H1 (cell line): ENCODE measurements at regions of chr6 and their contacts with region 1.

Region 1: DNA sequence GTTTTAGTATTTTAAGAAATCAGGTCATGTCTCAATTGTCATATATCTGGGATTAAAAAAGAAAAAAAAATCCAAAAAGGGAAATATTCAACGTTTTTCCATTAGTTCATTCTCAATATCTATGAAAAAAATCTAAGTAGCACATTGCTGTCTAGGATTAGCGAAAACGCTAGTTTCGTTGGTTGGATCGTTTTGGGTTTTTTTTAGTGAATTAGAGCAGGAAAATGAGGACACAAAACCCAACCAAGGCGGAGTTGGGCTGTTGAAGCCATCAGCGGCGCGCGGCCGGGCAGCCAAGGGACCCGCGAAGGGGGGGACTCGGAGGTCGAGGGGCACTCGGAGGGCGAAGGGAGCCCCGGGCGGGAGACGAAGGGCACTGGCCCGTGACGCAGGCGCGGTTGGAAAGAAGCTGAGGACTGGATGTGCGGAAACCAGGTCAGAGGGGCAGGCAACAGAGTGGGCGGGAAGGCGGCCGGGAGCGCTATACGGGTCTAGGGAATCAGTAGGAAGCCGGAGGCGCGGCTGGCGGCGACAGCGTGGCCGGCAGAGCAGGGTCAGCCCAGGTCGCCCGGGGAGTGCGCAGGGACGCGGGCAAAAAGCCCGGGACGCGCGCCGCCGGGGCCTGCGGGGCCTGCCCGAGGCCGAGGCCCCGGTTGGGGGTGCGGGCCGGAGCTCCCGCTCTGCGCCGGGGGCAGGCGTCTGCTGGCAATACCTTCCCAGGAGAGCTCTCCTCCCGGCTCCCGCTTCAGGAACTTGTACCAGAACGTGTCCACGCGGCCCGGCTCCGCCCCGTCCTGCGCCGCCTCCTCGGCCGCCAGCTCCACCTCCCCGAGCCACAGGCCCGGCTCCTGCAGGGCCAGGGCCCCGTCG is 599 bp downstream of the EPM2A start:
- DNase-seq: peak; percentile 80 to 88
- H3K4me3 ChIP-seq: peak overlapping the region; percentile 53 to 75 (median 60)
- H3K27ac ChIP-seq: peak overlapping the region; percentile 85
- H3K4me1 ChIP-seq: peaks cover 0 to 5% (median 0%) of the 10 kb centered on the region in 4 experiments; a peak in 2 of 7 replicates
- H3K27me3 ChIP-seq: no peaks in the 10 kb centered on the region
- CTCF ChIP-seq: no peak
- EP300 ChIP-seq: peak in 1 of 2 experiments; percentile 74; a peak in 1 of 3 replicates
- POLR2A ChIP-seq: peak; percentile 56 to 97
- RAD21 ChIP-seq: 0 out of 4 replicates have a peak, but pooled peaks of 1 of the 2 experiments have one; percentile 1

Region 2: DNA sequence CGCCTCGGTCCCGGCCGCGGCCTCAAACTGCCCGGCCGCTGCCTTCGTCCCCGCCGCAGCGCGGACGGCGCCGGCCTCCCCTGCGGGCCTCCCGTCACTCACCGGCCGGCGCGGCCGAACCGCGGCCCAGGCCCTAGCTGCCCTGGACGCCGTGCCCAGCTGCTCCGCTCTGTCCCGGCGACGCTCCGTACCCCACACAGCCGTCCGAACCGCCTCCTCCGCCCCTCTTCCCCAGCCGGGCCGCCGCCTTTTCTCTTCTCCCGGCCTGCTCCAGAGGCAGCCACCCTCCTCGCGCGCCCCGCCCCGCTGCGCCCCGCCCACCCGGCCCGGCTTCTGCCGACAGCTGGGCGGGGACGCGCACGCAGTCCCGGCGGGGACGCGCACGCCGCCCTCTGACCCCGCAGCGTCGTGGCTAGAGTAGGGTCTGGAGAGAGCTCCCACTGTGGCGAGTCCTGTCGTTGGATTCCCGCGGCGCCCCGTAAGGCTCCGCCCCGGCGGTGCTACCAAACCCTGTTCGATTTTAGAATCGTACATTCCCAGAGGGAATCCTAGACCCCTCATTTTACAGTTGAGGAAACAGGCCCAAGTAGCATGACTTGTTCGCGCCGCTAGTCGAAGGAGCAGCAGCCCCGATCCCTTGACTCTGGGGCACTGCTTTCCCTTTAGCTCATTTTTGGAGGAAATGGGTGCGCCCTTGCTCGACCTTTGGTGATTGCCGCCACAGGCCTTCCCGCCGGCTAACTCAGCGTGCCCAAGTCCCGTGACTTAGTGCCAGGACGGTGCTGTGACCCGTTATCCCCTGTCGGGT is 80.0 kb after region 1 on chr6 and contains the start of gene FBXO30:
- CTCF ChIA-PET with region 1: no interaction called
- POLR2A ChIA-PET with region 1: interaction called, 44 read pairs
- DNase-seq: peak; percentile 79 to 92
- H3K4me3 ChIP-seq: peak within 1 kb of the TSS; percentile 56 to 96 (median 88)
- H3K27ac ChIP-seq: peak within 1 kb of the TSS; percentile 90
- H3K4me1 ChIP-seq: peaks cover 0 to 7% (median 3%) of the 10 kb centered on the region in 4 experiments; a peak in 4 of 7 replicates
- H3K27me3 ChIP-seq: no peaks in the 10 kb centered on the region
- CTCF ChIP-seq: no peak
- EP300 ChIP-seq: no peak
- POLR2A ChIP-seq: peak; percentile 51 to 72
- RAD21 ChIP-seq: no peak
- total RNA-seq, gene FBXO30: 18.3 and 18.8 TPM in 2 replicates